ENCODE measurements at regions of chr12 and their contacts with region 1.

Region 1: GRCh38 chr12:98653866-98654493 is 8.9 kb downstream of the APAF1 start:
- DNase-seq: no peak
- H3K4me3 ChIP-seq: no peak overlapping the region
- H3K27ac ChIP-seq: no peak overlapping the region
- H3K4me1 ChIP-seq: no peaks in the 10 kb centered on the region
- H3K27me3 ChIP-seq: no peaks in the 10 kb centered on the region
- CTCF ChIP-seq: peak in 2 of 4 experiments; percentile 36 to 52
- EP300 ChIP-seq: no peak
- POLR2A ChIP-seq: no peak

Region 2: DNA sequence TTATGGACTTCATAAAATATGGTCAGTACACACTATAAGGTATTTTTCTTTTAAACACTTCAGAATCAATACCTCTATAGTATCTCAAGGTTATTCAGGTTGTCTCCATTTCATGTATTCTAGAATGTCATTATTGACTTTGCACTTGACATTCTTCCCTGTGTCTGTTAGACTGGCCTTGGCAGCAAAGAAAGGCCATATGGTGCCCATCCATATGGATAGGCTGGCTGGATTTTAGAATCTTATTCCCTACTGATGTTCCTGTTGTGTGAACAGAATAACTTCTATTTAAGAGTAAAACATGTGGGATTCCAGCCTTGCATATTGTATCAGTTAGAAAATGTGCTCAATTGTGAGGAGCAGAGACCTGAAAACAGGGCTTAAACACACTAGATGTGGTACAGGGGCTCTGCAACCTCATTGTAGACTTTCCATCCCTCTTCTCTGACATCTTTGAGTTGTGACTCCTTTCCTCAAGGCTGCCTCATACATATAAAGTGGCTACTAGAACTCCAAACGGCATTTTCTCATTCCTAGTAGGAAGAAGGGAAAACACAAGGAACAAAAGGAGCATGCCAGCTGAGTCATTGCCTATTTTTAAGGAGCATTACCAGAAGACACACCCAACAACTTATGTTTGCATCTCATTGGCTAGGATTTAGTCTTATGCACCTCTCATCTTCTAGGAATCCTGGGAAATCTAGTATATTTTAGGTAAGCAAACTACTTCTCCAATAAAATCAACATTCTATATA is 359.8 kb before region 1 on chr12:
- intact Hi-C with region 1: no loop called
- DNase-seq: no peak
- H3K4me3 ChIP-seq: no peak overlapping the region
- H3K27ac ChIP-seq: no peak overlapping the region
- H3K4me1 ChIP-seq: no peaks in the 10 kb centered on the region
- H3K27me3 ChIP-seq: no peaks in the 10 kb centered on the region
- CTCF ChIP-seq: no peak
- EP300 ChIP-seq: no peak
- POLR2A ChIP-seq: no peak

Region 3: DNA sequence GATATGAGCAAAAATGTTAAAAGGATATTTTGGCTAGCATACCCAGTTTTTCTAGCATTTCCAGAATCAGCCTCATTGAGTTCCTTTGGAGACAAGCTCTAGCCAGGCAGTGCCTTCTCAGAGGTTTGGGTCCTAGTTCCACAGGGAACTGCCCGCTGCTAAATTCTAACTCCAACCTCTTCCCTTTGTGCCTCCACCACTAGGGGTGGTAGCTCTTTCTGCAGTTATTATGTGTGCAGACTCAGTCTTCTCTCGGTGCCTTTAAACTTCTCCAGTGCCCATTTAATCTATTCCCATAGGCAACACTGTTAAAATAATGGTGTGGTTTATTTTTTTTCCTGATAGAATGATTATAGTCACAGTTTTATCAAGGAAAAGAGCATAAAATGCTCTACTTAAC is 82.0 kb before region 1 on chr12:
- intact Hi-C with region 1: loop called (anchors 5 kb)
- DNase-seq: no peak
- H3K4me3 ChIP-seq: no peak overlapping the region
- H3K27ac ChIP-seq: no peak overlapping the region
- H3K4me1 ChIP-seq: peaks cover 0 to 2% (median 0%) of the 10 kb centered on the region in 4 donors
- H3K27me3 ChIP-seq: no peaks in the 10 kb centered on the region
- CTCF ChIP-seq: no peak
- EP300 ChIP-seq: no peak
- POLR2A ChIP-seq: no peak

Region 4: DNA sequence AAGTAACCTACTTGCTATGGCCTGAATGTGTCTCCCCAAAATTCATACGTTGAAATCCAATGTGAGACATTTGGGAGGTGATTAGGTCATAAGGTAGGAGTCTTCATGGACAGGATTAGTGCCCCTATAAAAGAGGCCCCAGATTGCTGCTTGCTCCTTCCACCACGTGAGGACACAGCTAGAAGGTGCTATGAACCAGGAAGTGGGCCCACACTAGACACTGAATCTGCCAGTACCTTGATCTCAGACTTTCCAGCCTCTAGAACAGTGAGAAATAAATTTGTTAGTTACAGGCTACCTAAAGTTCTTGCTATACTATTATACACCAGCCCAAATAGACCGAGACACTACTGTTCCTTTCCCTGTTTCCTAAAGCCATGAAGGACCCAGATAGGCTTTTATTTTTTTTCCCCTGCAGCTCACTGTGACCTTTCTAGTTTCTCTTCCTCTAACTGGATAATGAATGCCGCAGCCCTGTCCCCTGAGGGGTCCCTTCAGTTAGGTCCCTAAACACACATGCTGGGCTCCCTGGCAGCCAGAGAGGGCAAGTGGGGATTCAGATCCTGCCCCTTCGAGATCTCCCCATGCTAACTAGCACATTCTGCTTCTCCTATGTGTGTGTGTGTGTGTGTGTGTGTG is 41.2 kb before region 1 on chr12:
- intact Hi-C with region 1: no loop called
- DNase-seq: no peak
- H3K4me3 ChIP-seq: no peak overlapping the region
- H3K27ac ChIP-seq: no peak overlapping the region
- H3K4me1 ChIP-seq: no peaks in the 10 kb centered on the region
- H3K27me3 ChIP-seq: no peaks in the 10 kb centered on the region
- CTCF ChIP-seq: no peak
- EP300 ChIP-seq: no peak
- POLR2A ChIP-seq: no peak